Stomach (tissue), 19 donors: ENCODE measurements at regions of chr5 and their contacts with region 1.

Region 1: GRCh38 chr5:122845229-122846050 is at the start of gene SNX24:
- DNase-seq: peak; percentile 86 to 95
- H3K4me3 ChIP-seq: peak within 1 kb of the TSS; percentile 73 to 98 (median 97)
- H3K27ac ChIP-seq: peak within 1 kb of the TSS; percentile 91 to 98 (median 95)
- H3K4me1 ChIP-seq: peaks cover 13 to 48% (median 27%) of the 10 kb centered on the region in 4 donors
- H3K27me3 ChIP-seq: no peaks in the 10 kb centered on the region
- CTCF ChIP-seq: no peak
- EP300 ChIP-seq: no peak
- POLR2A ChIP-seq: no peak
- total RNA-seq, gene SNX24: 1.2 to 38.5 (median 20.1) TPM

Region 2: GRCh38 chr5:122774861-122775549 is 70.4 kb before region 1 on chr5 and contains the start of gene SNX2:
- intact Hi-C with region 1: loop called (anchors 10 kb)
- DNase-seq: peak; percentile 96 to 98
- H3K4me3 ChIP-seq: peak within 1 kb of the TSS; percentile 73 to 94 (median 90)
- H3K27ac ChIP-seq: peak within 1 kb of the TSS; percentile 79 to 95 (median 89)
- H3K4me1 ChIP-seq: peaks cover 17 to 46% (median 29%) of the 10 kb centered on the region in 4 donors
- H3K27me3 ChIP-seq: no peaks in the 10 kb centered on the region
- CTCF ChIP-seq: peak in 1 of 7 experiments; percentile 8
- EP300 ChIP-seq: no peak
- POLR2A ChIP-seq: no peak
- total RNA-seq, gene SNX2: 22.8 to 504 (median 68.3) TPM